Lower leg skin (tissue), 4 donors: ENCODE measurements at regions of chr20 and their contacts with region 1.

Region 1: GRCh38 chr20:46102940-46103339 is 13.2 kb upstream of the NCOA5 start:
- DNase-seq: no peak
- H3K4me3 ChIP-seq: no peak overlapping the region
- CTCF ChIP-seq: no peak
- POLR2A ChIP-seq: no peak

Region 2: GRCh38 chr20:46243707-46244628 is 141.0 kb after region 1 on chr20:
- intact Hi-C with region 1: loop called (anchors 1 kb)
- DNase-seq: no peak
- H3K4me3 ChIP-seq: no peak overlapping the region
- CTCF ChIP-seq: no peak
- POLR2A ChIP-seq: no peak